SK-N-SH (cell line): ENCODE measurements at regions of chr17 and their contacts with region 1.

Region 1: DNA sequence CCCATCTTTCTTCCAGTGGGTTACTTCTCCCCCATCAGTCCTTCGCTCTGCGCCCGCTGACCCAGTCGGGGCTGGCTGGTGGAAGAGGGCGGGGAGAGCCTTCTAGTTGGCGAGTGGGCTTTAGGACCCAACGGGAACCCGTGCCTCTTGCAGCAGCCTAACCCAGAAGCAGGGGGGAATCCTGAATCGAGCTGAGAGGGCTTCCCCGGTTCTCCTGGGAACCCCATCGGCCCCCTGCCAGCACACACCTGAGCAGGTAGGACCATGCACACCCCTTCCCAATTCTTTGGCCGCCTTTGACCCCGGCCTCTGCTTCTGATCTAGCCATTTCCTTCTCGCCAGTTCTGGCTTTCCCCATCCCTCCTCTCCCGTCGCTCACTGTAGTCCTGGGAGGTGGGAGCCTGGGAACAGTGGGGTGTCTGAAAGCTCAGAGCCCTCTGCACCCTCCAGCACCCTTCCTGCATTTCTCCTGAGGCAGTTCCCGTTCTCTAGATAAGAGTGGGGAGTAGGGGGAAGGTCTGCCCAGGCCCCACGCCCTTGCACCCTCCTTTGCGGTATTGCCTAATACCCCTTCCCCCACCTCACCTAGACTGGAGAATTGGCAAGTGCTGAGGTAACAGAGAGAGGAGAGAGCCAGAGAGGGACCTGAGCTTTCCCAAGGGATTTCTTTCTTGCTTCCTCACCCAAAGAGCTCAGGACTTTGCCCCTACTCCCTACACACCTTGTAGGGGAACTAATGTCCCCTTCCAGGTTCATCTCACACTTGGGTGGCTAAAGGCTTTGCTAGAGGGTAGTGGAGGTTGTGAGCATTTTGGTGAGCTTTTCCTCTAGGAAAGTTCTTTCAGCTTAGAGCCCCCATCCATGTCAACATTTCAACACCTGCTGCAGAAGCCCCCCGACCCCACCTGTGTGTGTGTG is at the start of gene RARA:
- DNase-seq: peak; percentile 67
- H3K4me3 ChIP-seq: peak within 1 kb of the TSS; percentile 65 to 69
- H3K27ac ChIP-seq: peak within 1 kb of the TSS; percentile 95 to 99
- H3K4me1 ChIP-seq: peaks cover 69 to 90% of the 10 kb centered on the region in 2 experiments
- H3K27me3 ChIP-seq: no peaks in the 10 kb centered on the region
- CTCF ChIP-seq: no peak
- EP300 ChIP-seq: no peak
- RAD21 ChIP-seq: peak; percentile 27
- polyA plus RNA-seq, gene RARA: 8.9 and 13.3 TPM in 2 replicates

Region 2: DNA sequence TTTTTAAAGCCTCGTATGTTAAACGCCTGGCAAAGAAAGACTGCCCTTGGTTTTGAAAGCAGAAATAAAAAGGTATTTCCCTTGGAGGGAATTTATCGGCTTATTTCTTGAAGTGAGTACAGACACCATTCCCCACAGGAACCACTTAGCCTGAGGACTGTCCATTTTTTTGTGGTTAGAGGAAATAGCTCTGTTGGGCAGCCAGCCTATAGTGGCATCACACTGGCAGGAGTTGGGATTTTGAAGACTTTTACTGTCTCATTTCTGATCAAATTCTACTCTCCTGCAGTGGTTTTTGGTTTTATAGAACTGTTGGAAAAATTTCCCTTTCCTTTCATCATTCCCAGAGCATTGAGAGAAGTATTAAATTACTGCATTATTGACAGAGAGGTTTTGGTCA is 55.7 kb before region 1 on chr17:
- CTCF ChIA-PET with region 1: no interaction called
- POLR2A ChIA-PET with region 1: no interaction called
- DNase-seq: no peak
- H3K4me3 ChIP-seq: no peak overlapping the region
- H3K27ac ChIP-seq: peak overlapping the region in 1 of 2 experiments; percentile 1; a peak in 1 of 4 replicates
- H3K4me1 ChIP-seq: peaks cover 0 to 5% of the 10 kb centered on the region in 2 experiments; a peak in 1 of 4 replicates
- H3K27me3 ChIP-seq: no peaks in the 10 kb centered on the region
- CTCF ChIP-seq: no peak
- EP300 ChIP-seq: no peak
- RAD21 ChIP-seq: no peak

Region 3: DNA sequence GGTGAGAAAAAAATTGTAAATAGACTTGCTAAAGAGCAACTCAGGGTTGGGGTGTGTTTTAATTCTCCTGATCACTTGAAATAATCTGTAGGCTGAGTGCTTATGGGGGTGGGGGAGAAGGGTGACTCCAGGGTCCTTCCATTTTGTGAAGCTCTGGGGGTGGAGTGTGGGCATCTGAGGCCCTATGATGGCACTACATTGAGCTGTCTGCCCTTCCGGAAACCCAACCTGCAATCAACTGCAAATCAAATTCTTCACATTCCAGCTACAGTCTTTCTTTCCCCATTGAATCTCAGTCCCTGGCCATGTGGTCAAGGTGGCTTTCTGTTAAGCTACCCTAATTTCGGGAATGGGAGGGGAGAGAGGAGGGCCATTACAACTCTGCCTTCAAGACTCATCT is 27.6 kb before region 1 on chr17:
- CTCF ChIA-PET with region 1: no interaction called
- POLR2A ChIA-PET with region 1: no interaction called
- DNase-seq: no peak
- H3K4me3 ChIP-seq: no peak overlapping the region
- H3K27ac ChIP-seq: no peak overlapping the region
- H3K4me1 ChIP-seq: peaks cover 0 to 11% of the 10 kb centered on the region in 2 experiments; a peak in 1 of 4 replicates
- H3K27me3 ChIP-seq: no peaks in the 10 kb centered on the region
- CTCF ChIP-seq: no peak
- EP300 ChIP-seq: no peak
- RAD21 ChIP-seq: no peak

Region 4: GRCh38 chr17:40331743-40332641 is 22.7 kb after region 1 on chr17:
- CTCF ChIA-PET with region 1: interaction called, 1,706 read pairs
- POLR2A ChIA-PET with region 1: interaction called, 27 read pairs
- DNase-seq: peak; percentile 97
- H3K4me3 ChIP-seq: no peak overlapping the region; a peak in 1 of 4 replicates
- H3K27ac ChIP-seq: peak overlapping the region; percentile 81 to 98
- H3K4me1 ChIP-seq: peaks cover 55 to 73% of the 10 kb centered on the region in 2 experiments
- H3K27me3 ChIP-seq: no peaks in the 10 kb centered on the region
- CTCF ChIP-seq: no peak
- EP300 ChIP-seq: peak; percentile 76 to 94; a peak in 3 of 4 replicates
- RAD21 ChIP-seq: no peak